K562 (cell line): ENCODE measurements at regions of chr4 and their contacts with region 1.

Region 1: GRCh38 chr4:25312496-25313200 is at the start of gene ZCCHC4:
- DNase-seq: peak; percentile 91 to 96 (median 94)
- ATAC-seq: peak; percentile 97
- H3K4me3 ChIP-seq: peak within 1 kb of the TSS; percentile 67
- H3K27ac ChIP-seq: peak within 1 kb of the TSS; percentile 79
- H3K4me1 ChIP-seq: peaks cover 9 to 10% of the 10 kb centered on the region in 2 experiments; a peak in 4 of 5 replicates
- H3K27me3 ChIP-seq: no peaks in the 10 kb centered on the region
- CTCF ChIP-seq: peak; percentile 99
- EP300 ChIP-seq: peak; percentile 48; the same call in 1 of the 2 replicates
- POLR2A ChIP-seq: peak; percentile 93
- RAD21 ChIP-seq: peak; percentile 40 to 49; a peak in 3 of 4 replicates
- polyA plus RNA-seq, gene ZCCHC4: 5.3 to 7.9 TPM

Region 2: DNA sequence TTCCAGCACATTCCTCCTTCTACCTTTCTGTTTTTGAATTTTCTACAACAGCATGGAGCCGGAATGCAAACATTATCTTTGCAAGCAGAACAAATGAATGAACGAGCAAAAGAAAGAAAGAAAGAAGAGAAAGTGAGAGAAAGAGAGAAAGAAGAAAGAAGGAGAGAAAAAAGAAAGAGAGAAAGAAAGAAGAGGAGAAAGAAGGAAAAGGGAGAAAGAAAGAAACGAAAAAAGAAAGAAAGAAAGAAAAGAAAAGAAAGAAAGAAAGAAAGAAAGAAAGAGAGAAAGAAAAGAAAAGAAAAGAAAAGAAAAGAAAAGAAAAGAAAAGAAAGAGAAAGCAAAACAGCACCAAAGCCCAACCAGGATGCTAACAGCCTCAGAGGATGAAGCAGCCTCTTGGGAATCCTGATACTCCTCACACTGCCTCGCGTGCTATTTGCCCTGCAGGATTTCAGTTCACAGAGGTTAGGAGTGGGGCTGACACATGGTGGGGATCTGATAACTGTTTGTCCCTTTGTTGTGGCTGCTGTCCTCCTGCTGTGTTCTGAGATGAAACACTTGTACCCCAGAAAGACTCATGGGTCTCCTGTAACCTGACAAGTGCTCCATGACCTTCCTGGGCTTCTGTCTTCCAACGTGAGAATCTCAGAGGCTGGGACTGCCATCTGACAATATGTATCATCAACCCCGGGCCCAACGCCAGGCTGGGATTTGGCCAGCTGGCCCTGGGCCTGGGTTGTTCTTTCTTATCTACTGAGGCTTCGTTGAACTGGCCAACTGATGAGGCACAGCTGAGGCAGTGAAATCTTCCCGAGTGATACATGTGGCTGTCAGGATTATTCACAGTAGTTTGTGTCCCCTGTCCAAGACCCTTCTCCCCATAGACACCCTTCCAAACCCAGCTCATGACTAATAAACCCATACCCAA is 213.4 kb before region 1 on chr4:
- CTCF ChIA-PET with region 1: no interaction called
- POLR2A ChIA-PET with region 1: no interaction called
- in situ Hi-C with region 1: no loop called
- intact Hi-C with region 1: no loop called
- DNase-seq: peak; percentile 24 to 59 (median 40)
- ATAC-seq: peak; percentile 61
- H3K4me3 ChIP-seq: no peak overlapping the region
- H3K27ac ChIP-seq: no peak overlapping the region
- H3K4me1 ChIP-seq: peaks cover 6 to 7% of the 10 kb centered on the region in 2 experiments; a peak in 4 of 5 replicates
- H3K27me3 ChIP-seq: peaks cover 29 to 42% of the 10 kb centered on the region in 2 experiments
- CTCF ChIP-seq: no peak
- EP300 ChIP-seq: no peak
- POLR2A ChIP-seq: no peak
- RAD21 ChIP-seq: no peak

Region 3: DNA sequence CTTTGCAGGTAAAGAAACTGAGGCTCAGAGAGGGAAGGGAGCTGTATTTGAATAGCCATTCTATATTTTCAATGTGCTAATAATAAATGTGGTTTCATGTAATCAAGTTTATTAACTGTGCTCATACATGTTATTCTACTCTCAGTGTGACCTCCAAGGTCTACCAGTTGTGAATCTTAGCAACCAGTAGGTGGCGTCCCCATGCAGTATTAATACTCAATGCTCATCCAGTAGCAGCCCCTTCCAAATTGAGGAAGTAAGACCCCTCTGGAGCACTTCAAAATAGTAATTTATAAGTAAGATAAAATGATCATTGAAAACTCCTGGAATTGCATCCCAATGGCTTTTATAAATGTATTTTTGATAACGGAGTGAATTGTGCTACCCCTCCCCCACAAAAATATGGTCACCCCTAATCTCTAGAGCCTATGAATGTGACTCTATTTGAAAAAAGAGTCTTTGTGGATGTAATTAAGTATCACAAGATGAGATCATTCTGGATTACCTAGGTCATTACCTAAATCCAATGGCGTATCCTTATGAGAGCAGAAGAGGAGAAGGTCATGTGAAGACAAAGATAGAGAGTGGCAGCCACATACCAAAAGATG is 132.0 kb before region 1 on chr4:
- CTCF ChIA-PET with region 1: no interaction called
- POLR2A ChIA-PET with region 1: no interaction called
- in situ Hi-C with region 1: no loop called
- intact Hi-C with region 1: loop called (anchors 1 kb)
- DNase-seq: peak; percentile 33 to 70 (median 54)
- ATAC-seq: peak; percentile 96
- H3K4me3 ChIP-seq: no peak overlapping the region
- H3K27ac ChIP-seq: no peak overlapping the region
- H3K4me1 ChIP-seq: no peaks in the 10 kb centered on the region; a peak in 1 of 5 replicates
- H3K27me3 ChIP-seq: no peaks in the 10 kb centered on the region
- CTCF ChIP-seq: peak; percentile 65 to 76 (median 68)
- EP300 ChIP-seq: no peak
- POLR2A ChIP-seq: no peak
- RAD21 ChIP-seq: peak; percentile 54 to 65; a peak in 3 of 4 replicates

Region 4: GRCh38 chr4:25234390-25235370 is 78.0 kb before region 1 on chr4:
- CTCF ChIA-PET with region 1: interaction called, 3 read pairs
- POLR2A ChIA-PET with region 1: no interaction called
- in situ Hi-C with region 1: no loop called
- intact Hi-C with region 1: loop called (anchors 2 kb)
- DNase-seq: peak; percentile 19 to 71 (median 44)
- ATAC-seq: peak; percentile 73
- H3K4me3 ChIP-seq: peak overlapping the region; percentile 93
- H3K27ac ChIP-seq: peak overlapping the region; percentile 92
- H3K4me1 ChIP-seq: peaks cover 12 to 14% of the 10 kb centered on the region in 2 experiments; a peak in 4 of 5 replicates
- H3K27me3 ChIP-seq: no peaks in the 10 kb centered on the region
- CTCF ChIP-seq: peak; percentile 38 to 53 (median 49); a peak in 3 of 6 replicates
- EP300 ChIP-seq: no peak
- POLR2A ChIP-seq: no peak
- RAD21 ChIP-seq: peak in 1 of 2 experiments; percentile 15; a peak in 1 of 4 replicates

Region 5: GRCh38 chr4:25376754-25377571 is 64.3 kb after region 1 on chr4 and contains the start of gene ANAPC4:
- CTCF ChIA-PET with region 1: no interaction called
- POLR2A ChIA-PET with region 1: no interaction called
- in situ Hi-C with region 1: no loop called
- intact Hi-C with region 1: loop called (anchors 5 kb)
- DNase-seq: peak; percentile 97 to 99 (median 99)
- ATAC-seq: peak; percentile 95
- H3K4me3 ChIP-seq: peak within 1 kb of the TSS; percentile 69
- H3K27ac ChIP-seq: peak within 1 kb of the TSS; percentile 72
- H3K4me1 ChIP-seq: peaks cover 17% of the 10 kb centered on the region in 2 experiments; a peak in 4 of 5 replicates
- H3K27me3 ChIP-seq: no peaks in the 10 kb centered on the region
- CTCF ChIP-seq: no peak
- EP300 ChIP-seq: no peak
- POLR2A ChIP-seq: peak; percentile 91
- RAD21 ChIP-seq: no peak
- polyA plus RNA-seq, gene ANAPC4: 23.9 to 30.3 TPM